Activated CD4-positive, alpha-beta memory T cell treated with anti-CD3 and anti-CD28 coated beads, Interleukin-2, amount 10 ng/mL, durations not matched to agents 7 days and 5 days (primary cell): ENCODE measurements at regions of chr20 and their contacts with region 1.

Region 1: DNA sequence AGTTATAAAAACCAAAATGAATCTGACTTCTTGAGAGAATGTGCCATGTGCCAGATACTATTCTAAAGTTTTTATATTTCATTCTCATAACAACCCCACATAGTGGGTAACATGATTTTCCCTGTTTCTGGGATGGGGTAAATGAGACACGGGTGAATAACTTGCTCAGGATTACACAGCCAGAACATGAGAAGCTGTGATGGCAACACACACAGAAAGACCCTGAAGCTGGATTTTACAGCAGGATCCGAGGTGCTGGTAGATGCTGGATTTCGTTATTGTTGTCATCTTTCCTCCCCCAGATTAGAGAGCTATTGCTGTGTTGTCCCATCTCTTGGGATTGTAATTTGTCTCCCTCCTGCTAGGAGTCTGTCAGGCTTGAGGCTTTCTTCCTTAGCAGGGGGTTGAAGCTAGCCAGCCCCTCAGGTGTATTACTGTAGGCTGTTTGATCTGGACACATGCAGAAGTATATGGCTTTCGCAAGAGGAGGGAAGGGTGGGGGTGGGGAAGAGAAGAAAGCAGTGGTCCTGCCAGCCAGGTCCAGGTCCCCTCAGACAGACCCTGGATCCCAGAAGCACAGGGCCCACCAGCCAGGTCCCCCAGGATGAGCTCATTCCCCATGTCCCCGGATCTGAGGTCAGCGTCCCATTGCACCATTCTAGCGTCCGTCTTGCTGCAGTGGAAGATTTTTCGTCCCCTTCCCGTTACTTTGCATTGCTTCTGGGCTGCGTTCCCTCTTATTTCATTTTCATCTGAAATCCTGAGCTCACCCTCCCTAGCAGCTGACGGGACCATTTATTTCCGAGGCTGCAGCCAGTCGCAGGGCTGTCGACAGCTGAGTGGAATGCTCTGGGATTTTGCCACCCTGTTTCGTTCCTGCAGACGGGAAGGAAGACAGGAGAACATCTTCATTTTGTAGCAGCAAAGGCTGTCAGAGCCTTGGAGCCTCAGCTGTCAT is 7.3 kb upstream of the KCNG1 start:
- DNase-seq: no peak
- H3K4me3 Mint-ChIP-seq: no peak overlapping the region
- H3K27ac Mint-ChIP-seq: no peak overlapping the region
- H3K4me1 Mint-ChIP-seq: peaks cover 5% of the 10 kb centered on the region
- H3K27me3 Mint-ChIP-seq: peaks cover 58% of the 10 kb centered on the region

Region 2: GRCh38 chr20:51001758-51002157 is 28.5 kb before region 1 on chr20:
- CTCF ChIA-PET with region 1: no interaction called
- POLR2A ChIA-PET with region 1: no interaction called
- DNase-seq: no peak
- H3K4me3 Mint-ChIP-seq: no peak overlapping the region
- H3K27ac Mint-ChIP-seq: no peak overlapping the region
- H3K4me1 Mint-ChIP-seq: no peaks in the 10 kb centered on the region
- H3K27me3 Mint-ChIP-seq: peaks cover 26% of the 10 kb centered on the region

Region 3: DNA sequence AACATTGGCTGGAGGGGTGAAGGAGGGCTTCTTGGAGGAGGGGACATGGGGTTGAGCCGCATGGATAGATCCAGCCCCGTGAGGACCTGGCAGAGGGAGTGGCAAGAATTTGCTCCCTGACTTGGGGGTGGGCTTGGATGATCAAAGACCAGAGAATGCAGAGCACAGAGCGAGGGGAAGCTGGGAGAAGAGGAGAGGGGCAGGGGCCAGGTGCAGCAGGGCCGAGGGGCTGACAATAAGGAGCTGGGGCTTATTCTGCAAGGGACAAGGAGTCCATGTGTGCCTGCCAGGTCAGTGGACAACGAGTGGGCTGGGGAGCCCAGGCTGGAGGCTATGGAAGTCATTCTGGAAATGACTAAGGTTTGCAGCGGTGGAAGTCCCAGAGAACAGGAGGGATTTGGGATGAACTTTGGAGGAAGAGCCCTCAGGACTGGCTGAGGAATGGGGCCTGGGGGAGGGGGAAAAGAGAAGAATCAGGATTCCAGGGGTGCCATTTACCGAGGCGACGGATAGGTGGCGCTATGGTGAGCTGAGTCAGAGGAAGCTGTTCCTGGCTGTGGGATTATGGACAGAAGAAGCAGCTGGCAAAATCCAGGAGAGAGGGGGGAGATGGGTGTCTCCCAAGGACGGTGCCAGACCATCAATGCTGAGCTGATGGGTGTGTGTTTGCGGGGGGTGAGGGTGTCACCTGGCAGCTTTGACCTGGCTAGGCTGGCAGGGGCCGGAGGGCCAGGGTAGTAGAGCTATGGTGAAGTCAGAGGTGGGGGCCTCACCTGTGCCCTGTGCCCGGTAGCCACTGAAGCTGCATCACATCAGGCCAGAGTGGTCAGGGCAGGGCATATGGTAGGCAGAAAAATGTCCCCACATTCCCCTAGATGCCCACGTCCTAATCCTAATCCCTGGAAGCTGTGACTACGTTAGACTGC is 15.2 kb before region 1 on chr20:
- CTCF ChIA-PET with region 1: interaction called, 13 read pairs
- POLR2A ChIA-PET with region 1: no interaction called
- DNase-seq: peak; percentile 35
- H3K4me3 Mint-ChIP-seq: no peak overlapping the region
- H3K27ac Mint-ChIP-seq: no peak overlapping the region
- H3K4me1 Mint-ChIP-seq: no peaks in the 10 kb centered on the region
- H3K27me3 Mint-ChIP-seq: peaks cover 22% of the 10 kb centered on the region